OCI-LY7 (cell line): ENCODE measurements at regions of chr9 and their contacts with region 1.

Region 1: DNA sequence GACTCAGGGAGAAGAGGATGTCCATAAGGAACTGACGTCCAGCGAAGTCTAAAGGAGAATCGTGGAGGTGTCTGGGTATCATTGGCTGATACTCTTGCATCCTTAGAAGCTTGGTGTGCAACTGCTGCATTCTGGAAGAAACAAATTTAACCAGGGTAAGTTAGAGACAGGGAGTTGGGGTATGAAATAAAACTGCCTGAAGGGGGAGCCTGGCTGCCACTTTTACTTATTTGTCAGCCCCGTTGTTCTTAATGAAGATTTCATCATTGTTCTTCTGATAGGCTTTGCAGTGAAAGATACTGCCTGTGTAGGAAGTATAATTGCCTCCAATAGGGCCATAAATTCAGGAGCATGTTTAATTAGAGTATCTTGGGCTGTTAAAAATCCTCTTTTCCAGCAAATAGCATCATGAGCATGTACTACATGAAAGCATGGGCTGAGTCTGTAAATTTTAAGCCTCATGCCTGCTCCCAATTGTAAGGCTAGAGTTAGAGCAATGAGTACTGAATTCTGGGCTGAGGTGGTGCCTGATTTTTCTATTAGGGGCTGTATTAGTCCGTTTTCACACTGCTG is 1264.5 kb upstream of the ACO1 start:
- DNase-seq: peak; percentile 34
- H3K4me3 ChIP-seq: no peak overlapping the region
- H3K27ac ChIP-seq: no peak overlapping the region
- H3K4me1 ChIP-seq: no peaks in the 10 kb centered on the region
- CTCF ChIP-seq: peak; percentile 75

Region 2: DNA sequence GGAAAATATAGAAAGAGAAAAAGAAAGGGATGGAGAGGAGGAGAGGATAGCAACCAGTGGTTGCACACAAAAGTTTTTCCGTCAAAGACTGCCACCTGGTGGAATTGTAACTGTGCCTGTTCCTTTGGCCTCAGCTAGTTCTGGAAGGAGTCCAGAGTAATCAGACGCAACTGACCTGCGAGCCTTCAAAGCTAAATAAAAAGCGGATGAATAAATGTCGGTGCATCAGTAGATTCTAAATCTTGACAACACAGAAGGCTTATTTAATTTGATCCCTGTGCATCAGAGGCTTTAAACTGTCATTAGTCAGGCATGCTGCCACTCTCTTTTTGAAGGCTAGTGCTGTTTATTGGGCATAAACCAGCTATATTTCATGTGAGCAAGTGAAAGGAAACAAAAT is 1131.6 kb after region 1 on chr9:
- CTCF ChIA-PET with region 1: no interaction called
- POLR2A ChIA-PET with region 1: no interaction called
- intact Hi-C with region 1: loop called (anchors 10 kb)
- DNase-seq: peak; percentile 42
- H3K4me3 ChIP-seq: no peak overlapping the region
- H3K27ac ChIP-seq: no peak overlapping the region
- H3K4me1 ChIP-seq: no peaks in the 10 kb centered on the region
- CTCF ChIP-seq: peak; percentile 84